ENCODE measurements at regions of chr19 and their contacts with region 1.

Region 1: GRCh38 chr19:44770550-44771257 is 7.0 kb upstream of the CBLC start:
- DNase-seq: peak; percentile 86
- H3K4me3 ChIP-seq: no peak overlapping the region
- H3K27ac ChIP-seq: no peak overlapping the region
- H3K4me1 ChIP-seq: no peaks in the 10 kb centered on the region
- H3K27me3 ChIP-seq: peaks cover 4% of the 10 kb centered on the region
- CTCF ChIP-seq: peak; percentile 88

Region 2: GRCh38 chr19:44723952-44724319 is 46.8 kb before region 1 on chr19:
- intact Hi-C with region 1: loop called (anchors 5 kb)
- DNase-seq: peak; percentile 76
- H3K4me3 ChIP-seq: no peak overlapping the region
- H3K27ac ChIP-seq: peak overlapping the region; percentile 69
- H3K4me1 ChIP-seq: peaks cover 45% of the 10 kb centered on the region
- H3K27me3 ChIP-seq: no peaks in the 10 kb centered on the region
- CTCF ChIP-seq: peak; percentile 100

Region 3: DNA sequence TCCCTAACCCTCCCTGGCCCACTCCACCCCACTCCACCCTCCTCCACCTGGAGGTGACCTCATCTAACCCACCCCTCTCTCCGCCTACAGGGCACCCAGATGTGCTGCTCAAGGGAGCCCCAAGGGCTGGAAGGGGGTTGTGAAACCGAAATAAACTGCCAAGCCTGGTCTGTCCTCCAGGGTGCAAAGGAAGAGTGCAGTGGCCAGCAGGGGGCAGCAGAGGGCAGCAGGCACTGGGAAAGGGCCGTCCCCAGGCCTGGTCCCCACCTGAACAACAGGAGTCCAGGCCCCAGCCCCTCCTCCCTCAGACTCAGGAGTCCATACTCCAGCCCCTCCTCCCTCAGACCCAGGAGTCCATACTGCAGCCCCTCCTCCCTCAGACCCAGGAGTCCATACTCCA is 29.8 kb after region 1 on chr19:
- intact Hi-C with region 1: no loop called
- DNase-seq: peak; percentile 83
- H3K4me3 ChIP-seq: no peak overlapping the region
- H3K27ac ChIP-seq: no peak overlapping the region
- H3K4me1 ChIP-seq: peaks cover 21% of the 10 kb centered on the region
- H3K27me3 ChIP-seq: no peaks in the 10 kb centered on the region
- CTCF ChIP-seq: peak; percentile 94

Measured in left ventricle myocardium inferior (tissue), 1 donor.